ENCODE measurements at regions of chr2 and their contacts with region 1.

Region 1: GRCh38 chr2:44167940-44168680 is 565 bp upstream of the PPM1B start:
- DNase-seq: peak; percentile 97
- H3K4me3 Mint-ChIP-seq: peak overlapping the region; percentile 94
- H3K27ac Mint-ChIP-seq: peak overlapping the region; percentile 99
- H3K4me1 Mint-ChIP-seq: peaks cover 29% of the 10 kb centered on the region
- H3K27me3 Mint-ChIP-seq: no peaks in the 10 kb centered on the region

Region 2: DNA sequence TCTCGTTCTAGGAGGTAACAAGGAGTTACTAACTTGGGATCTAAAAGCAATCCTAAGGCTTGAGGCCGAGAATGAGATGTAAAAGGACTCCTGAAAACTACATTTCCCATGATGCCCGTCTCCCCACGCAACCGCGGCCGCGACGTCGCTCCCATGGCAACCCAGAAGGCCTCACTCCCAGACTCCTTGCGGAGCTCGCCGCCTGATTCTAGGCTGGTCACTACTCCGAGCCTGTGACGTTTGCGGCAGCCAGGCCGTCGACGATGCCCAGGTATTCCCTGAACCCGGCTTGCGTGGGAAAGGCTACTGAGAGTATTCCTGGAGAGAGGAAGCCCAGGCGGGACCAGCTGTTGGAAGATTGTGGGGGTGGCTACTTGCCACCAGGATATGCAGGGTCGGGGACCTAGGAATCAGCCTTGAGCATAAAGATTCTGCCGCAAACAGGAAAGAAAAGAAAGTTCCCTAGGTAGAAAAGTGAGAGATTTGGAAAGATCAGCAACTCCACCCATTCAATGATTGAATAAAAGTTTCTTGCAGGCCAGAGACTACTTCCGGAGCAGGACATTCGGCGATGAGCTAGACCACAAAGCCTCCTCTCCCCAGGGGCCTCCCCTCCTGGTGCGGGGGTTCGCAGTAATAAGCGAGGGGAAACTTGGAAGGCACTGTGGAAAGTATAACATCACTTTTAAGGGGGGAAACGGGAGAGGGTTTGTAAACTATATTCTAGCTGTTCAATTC is 394.1 kb before region 1 on chr2 and contains the start of gene DYNC2LI1:
- intact Hi-C with region 1: loop called (anchors 10 kb)
- DNase-seq: peak; percentile 74
- H3K4me3 Mint-ChIP-seq: peak within 1 kb of the TSS; percentile 86
- H3K27ac Mint-ChIP-seq: peak within 1 kb of the TSS; percentile 95
- H3K4me1 Mint-ChIP-seq: peaks cover 31% of the 10 kb centered on the region
- H3K27me3 Mint-ChIP-seq: no peaks in the 10 kb centered on the region
- total RNA-seq, gene DYNC2LI1: 67.7 and 71.6 TPM in 2 replicates

Region 3: GRCh38 chr2:43995733-43996533 is 172.2 kb before region 1 on chr2 and contains the start of gene LRPPRC:
- intact Hi-C with region 1: loop called (anchors 5 kb)
- DNase-seq: peak; percentile 87
- H3K4me3 Mint-ChIP-seq: peak within 1 kb of the TSS; percentile 93
- H3K27ac Mint-ChIP-seq: peak within 1 kb of the TSS; percentile 97
- H3K4me1 Mint-ChIP-seq: peaks cover 33% of the 10 kb centered on the region
- H3K27me3 Mint-ChIP-seq: peaks cover 2% of the 10 kb centered on the region
- total RNA-seq, gene LRPPRC: 156 and 161 TPM in 2 replicates

Region 4: GRCh38 chr2:44120428-44120827 is 47.7 kb before region 1 on chr2:
- intact Hi-C with region 1: loop called (anchors 1 kb)
- DNase-seq: peak; percentile 31
- H3K4me3 Mint-ChIP-seq: no peak overlapping the region
- H3K27ac Mint-ChIP-seq: peak overlapping the region; percentile 33
- H3K4me1 Mint-ChIP-seq: peaks cover 32% of the 10 kb centered on the region
- H3K27me3 Mint-ChIP-seq: no peaks in the 10 kb centered on the region

Region 5: DNA sequence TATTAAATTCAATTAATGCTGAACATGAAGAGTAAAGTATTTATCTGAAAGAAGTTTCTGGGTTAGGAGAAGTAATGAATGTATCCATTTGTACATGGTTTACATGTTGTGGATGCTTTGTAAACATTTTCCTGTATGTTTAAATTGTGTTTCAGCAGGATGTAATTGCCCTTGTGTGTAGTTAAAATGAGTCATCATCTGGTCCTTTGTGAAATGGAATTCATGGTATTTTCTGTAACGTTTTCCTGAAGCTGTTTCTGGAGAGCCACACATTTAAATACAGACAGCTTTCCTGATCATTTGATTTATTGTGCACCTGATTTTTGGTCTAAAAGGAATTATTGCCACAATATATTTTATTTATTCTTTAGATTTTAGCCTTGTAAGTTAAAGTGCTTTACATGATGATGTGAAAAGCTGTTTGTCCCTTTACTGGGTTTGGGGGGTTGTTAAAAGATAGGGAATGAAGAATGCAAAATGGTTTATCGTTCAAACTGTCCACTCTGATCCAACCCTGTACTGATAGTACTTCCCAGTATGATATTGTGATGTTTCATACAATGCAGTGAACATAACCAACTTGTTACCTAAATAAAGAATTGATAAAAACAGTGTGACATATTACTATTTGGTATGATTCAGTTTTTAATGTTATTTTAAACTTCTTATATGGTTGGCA is 65.5 kb after region 1 on chr2:
- intact Hi-C with region 1: loop called (anchors 5 kb)
- DNase-seq: no peak
- H3K4me3 Mint-ChIP-seq: no peak overlapping the region
- H3K27ac Mint-ChIP-seq: no peak overlapping the region
- H3K4me1 Mint-ChIP-seq: peaks cover 15% of the 10 kb centered on the region
- H3K27me3 Mint-ChIP-seq: no peaks in the 10 kb centered on the region

Measured in activated T-helper 2 cell treated with anti-CD3 and anti-CD28 coated beads, Interferon-gamma antibody, Interleukin-2, Interleukin-4, amounts not matched to agents 10 μg/mL and 5 μg/mL and 100 μg/mL, durations not matched to agents 14 hours and 24 hours and 36 hours (primary cell).